ENCODE measurements at regions of chr1 and their contacts with region 1.

Region 1: DNA sequence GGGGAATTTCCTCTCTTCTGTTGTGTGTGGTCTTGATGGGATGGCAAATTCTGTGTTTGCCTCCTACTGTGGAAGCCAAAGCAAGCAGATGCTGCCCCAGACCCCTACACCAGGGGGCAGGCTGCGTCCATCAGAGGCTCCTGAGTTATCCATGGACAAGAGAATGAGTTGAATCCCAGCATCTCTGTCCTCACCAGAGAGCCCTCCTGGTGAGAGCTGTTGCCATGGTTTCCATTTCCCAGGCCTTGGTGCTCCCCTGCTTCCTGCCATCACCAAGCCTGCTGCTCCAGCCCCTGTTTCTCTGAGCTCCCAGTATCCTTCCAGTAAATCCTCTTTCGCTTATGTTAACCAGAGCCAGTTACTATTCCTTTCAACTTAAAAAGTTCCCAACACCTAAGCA is 20.4 kb upstream of the GNG12 start:
- DNase-seq: peak; percentile 89
- H3K4me3 ChIP-seq: no peak overlapping the region
- H3K27ac ChIP-seq: no peak overlapping the region
- H3K4me1 ChIP-seq: peaks cover 49% of the 10 kb centered on the region
- H3K27me3 ChIP-seq: no peaks in the 10 kb centered on the region
- CTCF ChIP-seq: peak; percentile 94 to 95
- POLR2A ChIP-seq: no peak

Region 2: GRCh38 chr1:67535474-67535873 is 318.2 kb before region 1 on chr1:
- CTCF ChIA-PET with region 1: interaction called, 10 read pairs
- POLR2A ChIA-PET with region 1: no interaction called
- dilution Hi-C with region 1: no loop called
- intact Hi-C with region 1: loop called (anchors 1 kb)
- DNase-seq: peak; percentile 92
- H3K4me3 ChIP-seq: no peak overlapping the region
- H3K27ac ChIP-seq: no peak overlapping the region
- H3K4me1 ChIP-seq: peaks cover 10% of the 10 kb centered on the region
- H3K27me3 ChIP-seq: no peaks in the 10 kb centered on the region
- CTCF ChIP-seq: peak; percentile 93 to 94
- POLR2A ChIP-seq: no peak

Region 3: GRCh38 chr1:67832737-67833601 is 20.7 kb before region 1 on chr1 and contains the start of gene GNG12:
- CTCF ChIA-PET with region 1: interaction called, 17 read pairs
- POLR2A ChIA-PET with region 1: interaction called, 4 read pairs
- dilution Hi-C with region 1: no loop called
- intact Hi-C with region 1: loop called (anchors 1 kb)
- DNase-seq: peak; percentile 83
- H3K4me3 ChIP-seq: peak within 1 kb of the TSS; percentile 55 to 86 (median 55)
- H3K27ac ChIP-seq: peak within 1 kb of the TSS; percentile 90
- H3K4me1 ChIP-seq: peaks cover 29% of the 10 kb centered on the region
- H3K27me3 ChIP-seq: no peaks in the 10 kb centered on the region
- CTCF ChIP-seq: no peak
- POLR2A ChIP-seq: peak; percentile 85
- total RNA-seq, gene GNG12: 145 and 152 TPM in 2 replicates

Region 4: DNA sequence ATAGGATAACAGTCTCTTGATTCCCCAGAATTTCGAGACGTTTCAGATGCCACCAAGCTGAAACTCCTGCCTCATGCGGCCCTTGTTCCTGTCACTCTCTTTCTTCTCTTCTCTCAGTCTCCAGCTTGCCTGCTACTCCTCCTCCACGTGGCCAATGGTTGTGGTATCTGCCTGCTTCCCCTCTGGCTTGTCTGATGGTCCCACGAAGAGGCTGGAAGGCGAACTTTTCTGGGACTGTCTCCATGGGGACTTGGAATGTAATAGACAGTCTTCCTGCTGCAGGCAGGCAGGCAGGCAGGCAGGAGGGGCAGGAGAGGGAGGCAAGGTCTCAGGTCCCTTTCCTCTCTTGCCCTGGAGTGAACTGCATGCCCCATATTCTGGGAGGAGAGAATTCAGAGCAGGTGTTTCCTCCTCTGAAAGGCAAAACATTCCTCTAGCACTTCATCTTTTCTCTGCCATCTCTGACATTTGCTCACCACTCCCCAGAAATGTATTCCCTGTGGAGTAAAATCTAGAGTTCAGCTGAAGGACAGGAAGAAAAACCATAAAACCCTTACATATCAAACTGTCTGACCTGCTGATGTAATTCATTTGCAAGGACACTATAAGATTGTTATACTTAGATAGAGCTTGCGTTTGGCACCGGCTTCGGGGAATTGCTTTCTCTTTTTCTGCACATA is 43.7 kb after region 1 on chr1:
- CTCF ChIA-PET with region 1: interaction called, 10 read pairs
- POLR2A ChIA-PET with region 1: no interaction called
- dilution Hi-C with region 1: no loop called
- intact Hi-C with region 1: loop called (anchors 1 kb)
- DNase-seq: peak; percentile 97
- H3K4me3 ChIP-seq: no peak overlapping the region
- H3K27ac ChIP-seq: peak overlapping the region; percentile 91
- H3K4me1 ChIP-seq: peaks cover 26% of the 10 kb centered on the region
- H3K27me3 ChIP-seq: no peaks in the 10 kb centered on the region
- CTCF ChIP-seq: no peak
- POLR2A ChIP-seq: no peak

Region 5: DNA sequence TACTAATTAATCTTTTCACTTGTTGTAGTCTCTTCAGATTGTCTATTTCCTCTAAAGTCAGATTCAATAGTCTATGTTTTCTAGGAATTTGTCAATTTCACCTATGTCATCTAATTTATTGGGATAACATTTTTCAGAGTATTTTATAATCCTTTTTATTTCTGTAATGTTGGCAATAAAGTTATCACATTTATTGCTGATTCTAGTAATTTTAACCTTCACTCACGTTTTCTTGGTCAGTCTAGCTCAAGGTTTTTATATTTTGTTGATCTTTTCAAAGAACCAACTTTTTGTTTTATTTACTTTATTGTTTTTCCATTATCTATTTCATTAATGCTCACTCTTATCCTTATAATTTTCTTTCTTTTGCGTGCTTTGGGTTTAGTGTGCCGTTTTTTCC is 77.5 kb after region 1 on chr1:
- CTCF ChIA-PET with region 1: no interaction called
- POLR2A ChIA-PET with region 1: no interaction called
- dilution Hi-C with region 1: no loop called
- intact Hi-C with region 1: no loop called
- DNase-seq: no peak
- H3K4me3 ChIP-seq: no peak overlapping the region
- H3K27ac ChIP-seq: no peak overlapping the region
- H3K4me1 ChIP-seq: no peaks in the 10 kb centered on the region
- H3K27me3 ChIP-seq: no peaks in the 10 kb centered on the region
- CTCF ChIP-seq: no peak
- POLR2A ChIP-seq: no peak

Region 6: GRCh38 chr1:68051475-68051874 is 197.8 kb after region 1 on chr1:
- CTCF ChIA-PET with region 1: interaction called, 65 read pairs
- POLR2A ChIA-PET with region 1: no interaction called
- dilution Hi-C with region 1: no loop called
- intact Hi-C with region 1: loop called (anchors 1 kb)
- DNase-seq: peak; percentile 77
- H3K4me3 ChIP-seq: peak overlapping the region in 2 of 3 experiments; percentile 42 to 49
- H3K27ac ChIP-seq: no peak overlapping the region
- H3K4me1 ChIP-seq: no peaks in the 10 kb centered on the region
- H3K27me3 ChIP-seq: no peaks in the 10 kb centered on the region
- CTCF ChIP-seq: peak; percentile 39 to 59
- POLR2A ChIP-seq: peak; percentile 20

Region 7: DNA sequence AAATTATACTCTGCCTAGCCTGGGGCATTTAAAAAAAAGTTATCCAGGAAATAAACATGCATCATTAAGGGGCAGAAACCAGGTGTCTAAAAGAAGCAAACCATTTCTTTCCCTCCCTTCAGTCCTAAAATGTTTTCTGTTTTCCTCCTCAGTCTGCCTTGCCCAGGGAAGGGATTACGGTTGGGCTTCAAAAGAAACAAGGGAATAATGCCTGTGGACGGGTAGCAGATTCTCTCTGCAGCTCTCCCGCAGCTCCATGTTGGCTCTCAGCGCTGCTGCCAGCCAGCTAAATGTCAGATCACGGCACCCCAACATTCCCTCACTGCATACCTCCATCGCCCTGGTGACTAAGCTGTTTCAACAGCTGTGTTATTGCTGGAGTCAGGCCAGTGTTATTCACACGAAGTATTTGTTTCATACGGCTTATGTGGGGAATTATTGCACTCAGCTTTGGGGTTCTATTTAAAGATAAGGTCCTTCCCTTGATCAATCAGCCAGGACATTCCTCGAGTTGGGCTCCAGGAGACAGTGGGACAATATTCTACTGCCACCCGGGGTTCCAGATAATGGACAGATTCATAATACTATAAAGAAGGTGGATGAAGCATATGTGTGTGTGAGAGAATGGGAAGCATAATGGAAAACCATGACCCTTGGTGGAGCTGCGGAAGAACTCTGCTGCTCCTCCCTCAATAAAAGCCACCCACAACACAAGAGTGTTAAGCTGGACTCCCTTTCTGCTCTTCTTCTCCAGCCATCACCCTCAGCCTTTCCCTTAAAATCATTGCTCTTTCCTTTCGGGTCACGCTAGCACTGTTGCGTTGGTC is 320.4 kb after region 1 on chr1:
- CTCF ChIA-PET with region 1: no interaction called
- POLR2A ChIA-PET with region 1: no interaction called
- dilution Hi-C with region 1: no loop called
- intact Hi-C with region 1: loop called (anchors 5 kb)
- DNase-seq: peak; percentile 98
- H3K4me3 ChIP-seq: peak overlapping the region in 1 of 3 experiments; percentile 41
- H3K27ac ChIP-seq: peak overlapping the region; percentile 93
- H3K4me1 ChIP-seq: peaks cover 66% of the 10 kb centered on the region
- H3K27me3 ChIP-seq: no peaks in the 10 kb centered on the region
- CTCF ChIP-seq: no peak
- POLR2A ChIP-seq: peak; percentile 60

Region 8: GRCh38 chr1:68384321-68384813 is 530.7 kb after region 1 on chr1:
- CTCF ChIA-PET with region 1: no interaction called
- POLR2A ChIA-PET with region 1: no interaction called
- dilution Hi-C with region 1: no loop called
- intact Hi-C with region 1: loop called (anchors 1 kb)
- DNase-seq: peak; percentile 98
- H3K4me3 ChIP-seq: peak overlapping the region in 1 of 3 experiments; percentile 18
- H3K27ac ChIP-seq: peak overlapping the region; percentile 97
- H3K4me1 ChIP-seq: peaks cover 30% of the 10 kb centered on the region
- H3K27me3 ChIP-seq: no peaks in the 10 kb centered on the region
- CTCF ChIP-seq: peak; percentile 32 to 35
- POLR2A ChIP-seq: no peak

Measured in endothelial cell of umbilical vein (primary cell).